Ascending aorta (tissue), 2 donors: ENCODE measurements at regions of chr19 and their contacts with region 1.

Region 1: GRCh38 chr19:32580901-32581703 is at the start of gene PDCD5:
- DNase-seq: peak; percentile 86 to 98
- H3K4me3 ChIP-seq: peak within 1 kb of the TSS; percentile 86 to 88
- H3K27ac ChIP-seq: peak within 1 kb of the TSS; percentile 76 to 81
- H3K4me1 ChIP-seq: peaks cover 0 to 5% of the 10 kb centered on the region in 2 donors
- H3K27me3 ChIP-seq: no peaks in the 10 kb centered on the region
- CTCF ChIP-seq: no peak
- total RNA-seq, gene PDCD5: 36.6 TPM

Region 2: DNA sequence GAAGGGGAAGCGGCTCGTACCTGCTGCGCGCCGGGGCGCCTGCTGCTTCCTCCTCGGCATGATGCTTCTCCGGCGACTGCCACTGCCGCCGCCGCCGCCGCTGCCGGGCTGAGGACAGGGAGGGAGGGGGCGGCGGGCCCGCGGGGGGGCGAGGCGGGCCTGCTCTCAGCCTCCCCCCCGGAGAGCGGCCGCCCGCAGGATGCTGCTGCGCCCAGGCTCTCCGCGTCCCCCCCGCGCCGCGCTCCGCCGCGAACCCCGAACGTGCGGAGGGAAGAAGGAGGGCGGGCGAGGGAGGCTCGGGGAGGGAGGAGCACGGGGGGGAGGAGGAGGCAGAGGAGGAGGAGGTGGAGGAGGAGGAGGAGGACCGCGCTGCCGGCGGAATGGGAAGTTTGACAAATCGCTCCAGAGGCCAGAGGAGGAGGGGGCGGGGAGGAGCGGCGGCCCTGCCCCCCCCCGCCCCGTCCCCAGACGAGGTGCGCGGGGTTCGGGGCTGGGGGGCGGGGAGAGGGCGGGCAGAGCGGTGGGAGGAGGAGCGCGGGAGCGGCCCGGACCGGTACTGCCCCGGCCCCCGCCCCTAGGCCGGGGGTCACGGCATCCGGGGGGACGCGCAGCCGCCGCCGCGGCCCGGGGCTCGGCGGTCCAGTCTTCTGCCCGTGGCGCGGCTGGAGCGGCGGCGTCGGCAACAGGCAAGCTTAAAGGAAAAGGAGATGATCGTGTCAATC is 1231.8 kb before region 1 on chr19 and contains the start of gene TSHZ3:
- intact Hi-C with region 1: loop called (anchors 2 kb)
- DNase-seq: peak in 1 of 2 donors; percentile 85
- H3K4me3 ChIP-seq: peak within 1 kb of the TSS; percentile 88 to 98
- H3K27ac ChIP-seq: peak within 1 kb of the TSS; percentile 75 to 90
- H3K4me1 ChIP-seq: peaks cover 7 to 13% of the 10 kb centered on the region in 2 donors
- H3K27me3 ChIP-seq: no peaks in the 10 kb centered on the region
- CTCF ChIP-seq: no peak
- total RNA-seq, gene TSHZ3: 9.9 TPM

Region 3: GRCh38 chr19:32345261-32346207 is 235.6 kb before region 1 on chr19 and contains the start of gene ZNF507:
- intact Hi-C with region 1: loop called (anchors 5 kb)
- DNase-seq: peak in 1 of 2 donors; percentile 86
- H3K4me3 ChIP-seq: peak within 1 kb of the TSS; percentile 67 to 94
- H3K27ac ChIP-seq: peak within 1 kb of the TSS; percentile 51 to 73
- H3K4me1 ChIP-seq: peaks cover 3 to 22% of the 10 kb centered on the region in 2 donors
- H3K27me3 ChIP-seq: no peaks in the 10 kb centered on the region
- CTCF ChIP-seq: peak in 1 of 3 experiments; percentile 10
- total RNA-seq, gene ZNF507: 6.4 TPM

Region 4: DNA sequence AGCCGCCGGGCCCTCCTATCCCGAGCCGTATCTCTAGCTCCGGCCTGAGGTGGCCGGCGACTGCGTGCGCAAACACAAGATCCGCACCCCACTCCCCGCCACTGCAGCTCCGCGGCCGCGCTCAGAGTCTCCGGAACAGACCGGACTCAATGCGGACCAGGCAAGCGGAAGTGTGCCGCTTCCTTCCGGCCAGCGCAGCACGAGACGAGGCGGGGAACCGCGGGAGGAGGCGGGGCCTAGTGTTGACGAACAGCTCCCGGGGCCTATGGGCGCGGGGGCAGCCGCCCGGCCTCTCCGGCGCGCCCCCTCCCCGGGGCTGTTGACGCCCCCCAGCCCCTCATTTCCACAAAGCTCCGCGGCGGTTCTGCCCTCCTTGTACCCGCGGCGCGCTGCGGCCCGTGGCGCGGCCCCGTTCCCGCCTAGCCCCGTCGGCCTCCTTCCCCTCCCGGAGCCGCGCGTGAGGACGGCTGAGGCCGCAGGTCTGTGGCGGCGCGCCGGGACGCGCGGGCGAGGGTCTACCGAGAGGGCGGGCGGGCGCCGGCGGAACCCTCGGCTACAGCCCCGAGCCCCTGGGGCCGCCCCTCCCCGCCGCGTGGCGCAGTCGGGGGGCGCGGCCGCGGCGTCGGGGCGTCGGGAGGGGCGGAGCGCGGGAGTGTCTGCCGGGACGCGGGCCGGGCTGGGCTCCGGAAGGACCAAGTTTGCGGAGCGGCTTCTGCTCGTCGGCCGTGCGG is 175.5 kb before region 1 on chr19 and contains the start of gene DPY19L3:
- intact Hi-C with region 1: loop called (anchors 1 kb)
- DNase-seq: peak; percentile 81 to 97
- H3K4me3 ChIP-seq: peak within 1 kb of the TSS; percentile 93 to 94
- H3K27ac ChIP-seq: peak within 1 kb of the TSS; percentile 99 to 100
- H3K4me1 ChIP-seq: peaks cover 0 to 14% of the 10 kb centered on the region in 2 donors
- H3K27me3 ChIP-seq: no peaks in the 10 kb centered on the region
- CTCF ChIP-seq: no peak
- total RNA-seq, gene DPY19L3: 115 TPM

Region 5: GRCh38 chr19:32427536-32427935 is 153.6 kb before region 1 on chr19:
- intact Hi-C with region 1: no loop called
- DNase-seq: no peak
- H3K4me3 ChIP-seq: no peak overlapping the region
- H3K27ac ChIP-seq: no peak overlapping the region
- H3K4me1 ChIP-seq: no peaks in the 10 kb centered on the region
- H3K27me3 ChIP-seq: no peaks in the 10 kb centered on the region
- CTCF ChIP-seq: no peak

Region 6: DNA sequence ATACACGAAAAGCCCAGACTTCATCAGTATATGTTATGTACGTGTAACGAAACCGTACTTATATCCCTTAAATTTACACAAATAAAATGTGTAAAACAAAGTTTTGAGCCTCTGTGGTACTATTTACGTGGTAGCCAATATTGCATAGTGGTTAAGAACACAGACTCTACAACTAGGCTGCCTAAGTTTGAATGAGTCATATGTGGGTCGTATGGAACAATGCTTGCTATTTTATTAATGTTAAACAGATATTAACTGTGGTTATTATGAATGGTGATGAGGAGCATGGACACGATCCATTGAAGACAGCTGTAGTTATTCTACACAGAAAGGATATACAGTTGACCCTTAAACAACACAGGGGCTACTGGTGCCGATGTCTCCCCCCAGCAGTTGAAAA is 133.1 kb before region 1 on chr19:
- intact Hi-C with region 1: no loop called
- DNase-seq: no peak
- H3K4me3 ChIP-seq: no peak overlapping the region
- H3K27ac ChIP-seq: no peak overlapping the region
- H3K4me1 ChIP-seq: no peaks in the 10 kb centered on the region
- H3K27me3 ChIP-seq: no peaks in the 10 kb centered on the region
- CTCF ChIP-seq: no peak

Region 7: GRCh38 chr19:32498648-32499200 is 82.4 kb before region 1 on chr19:
- intact Hi-C with region 1: no loop called
- DNase-seq: no peak
- H3K4me3 ChIP-seq: no peak overlapping the region
- H3K27ac ChIP-seq: no peak overlapping the region
- H3K4me1 ChIP-seq: no peaks in the 10 kb centered on the region
- H3K27me3 ChIP-seq: no peaks in the 10 kb centered on the region
- CTCF ChIP-seq: no peak

Region 8: GRCh38 chr19:32619051-32619682 is 38.1 kb after region 1 on chr19:
- intact Hi-C with region 1: no loop called
- DNase-seq: no peak
- H3K4me3 ChIP-seq: no peak overlapping the region
- H3K27ac ChIP-seq: no peak overlapping the region
- H3K4me1 ChIP-seq: no peaks in the 10 kb centered on the region
- H3K27me3 ChIP-seq: no peaks in the 10 kb centered on the region
- CTCF ChIP-seq: no peak

Region 9: GRCh38 chr19:32691291-32691951 is 110.3 kb after region 1 on chr19 and contains the start of gene NUDT19:
- intact Hi-C with region 1: loop called (anchors 5 kb)
- DNase-seq: peak; percentile 51 to 91
- H3K4me3 ChIP-seq: peak within 1 kb of the TSS; percentile 82 to 95
- H3K27ac ChIP-seq: peak within 1 kb of the TSS; percentile 61 to 86
- H3K4me1 ChIP-seq: peaks cover 10 to 15% of the 10 kb centered on the region in 2 donors
- H3K27me3 ChIP-seq: no peaks in the 10 kb centered on the region
- CTCF ChIP-seq: no peak
- total RNA-seq, gene NUDT19: 6.2 TPM

Region 10: DNA sequence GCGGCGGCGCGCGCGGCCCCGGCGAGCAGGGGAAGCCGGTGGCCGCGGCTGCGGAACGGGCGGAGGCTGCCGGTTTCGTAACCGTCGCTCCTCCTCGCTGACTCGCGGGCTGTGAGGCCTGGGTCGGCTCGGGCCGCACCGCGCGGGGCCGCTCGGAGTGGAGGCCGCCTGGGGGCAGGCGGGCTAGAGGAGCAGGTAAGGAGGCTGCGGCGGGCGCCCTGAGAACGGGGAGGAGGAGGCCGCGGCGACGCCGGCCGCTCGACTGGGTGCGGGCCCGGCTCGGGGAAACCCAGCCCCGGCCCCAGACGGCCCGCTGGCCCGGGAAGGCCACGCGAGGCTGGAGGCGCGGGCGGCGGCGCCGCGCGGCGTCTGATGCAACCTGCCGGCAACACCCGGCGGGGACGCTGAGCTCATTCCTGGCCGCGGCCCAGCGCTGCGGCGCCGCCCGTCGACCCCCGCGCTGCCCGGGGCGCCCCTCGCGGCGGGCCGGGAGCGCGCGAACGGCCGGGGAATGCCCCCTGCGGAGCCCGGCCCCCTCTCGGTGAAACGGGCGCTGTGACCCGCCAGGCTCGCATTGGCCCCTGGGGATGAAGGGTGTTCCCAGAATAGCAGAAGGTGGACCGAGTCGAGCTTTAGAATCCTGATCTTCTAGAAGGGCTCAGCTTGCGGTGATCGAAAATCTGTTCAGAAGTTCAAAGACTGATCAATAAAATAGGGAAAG is 792.8 kb after region 1 on chr19 and contains the start of gene CEBPG:
- intact Hi-C with region 1: loop called (anchors 5 kb)
- DNase-seq: no peak
- H3K4me3 ChIP-seq: peak within 1 kb of the TSS; percentile 87
- H3K27ac ChIP-seq: peak within 1 kb of the TSS; percentile 96 to 97
- H3K4me1 ChIP-seq: peaks cover 0 to 19% of the 10 kb centered on the region in 2 donors
- H3K27me3 ChIP-seq: no peaks in the 10 kb centered on the region
- CTCF ChIP-seq: peak in 1 of 3 experiments; percentile 28
- total RNA-seq, gene CEBPG: 21.9 TPM